Naive thymus-derived CD8-positive, alpha-beta T cell (primary cell): ENCODE measurements at regions of chr17 and their contacts with region 1.

Region 1: GRCh38 chr17:79796763-79797491 is at the start of gene CBX8:
- DNase-seq: peak; percentile 96 to 100 (median 98)
- ATAC-seq: peak; percentile 82 to 85
- H3K4me3 Mint-ChIP-seq: peak within 1 kb of the TSS; percentile 82 to 94 (median 88)
- H3K27ac Mint-ChIP-seq: peak within 1 kb of the TSS; percentile 53 to 97 (median 90)
- H3K4me1 Mint-ChIP-seq: peaks cover 13 to 47% (median 43%) of the 10 kb centered on the region in 4 donors
- H3K27me3 Mint-ChIP-seq: peaks cover 21 to 40% (median 30%) of the 10 kb centered on the region in 5 donors
- polyA plus RNA-seq, gene CBX8: 0.13 to 1.4 (median 0.77) TPM

Region 2: DNA sequence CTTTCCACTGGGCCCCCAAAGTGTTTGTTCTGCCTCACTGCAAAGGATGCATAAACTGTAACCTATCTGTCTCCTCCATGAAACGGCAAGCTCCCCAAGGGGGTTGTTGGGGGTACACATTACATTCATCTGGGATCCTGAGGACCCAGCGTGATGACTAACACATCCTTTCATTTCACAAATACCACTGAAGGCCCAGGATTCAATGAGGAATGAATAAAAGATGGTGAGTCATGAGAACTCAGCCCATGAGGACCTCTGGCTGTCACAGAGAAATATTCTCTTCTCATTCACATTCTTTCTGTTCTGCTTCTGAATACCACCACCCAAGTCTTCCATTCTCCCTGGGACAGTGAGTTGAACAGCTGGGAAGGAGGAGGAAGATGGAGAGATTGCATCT is 335.9 kb before region 1 on chr17:
- POLR2A ChIA-PET with region 1: no interaction called
- DNase-seq: no peak
- ATAC-seq: no peak
- H3K4me3 Mint-ChIP-seq: no peak overlapping the region
- H3K27ac Mint-ChIP-seq: no peak overlapping the region
- H3K4me1 Mint-ChIP-seq: peaks cover 0 to 2% (median 0%) of the 10 kb centered on the region in 4 donors
- H3K27me3 Mint-ChIP-seq: peaks cover 0 to 16% (median 10%) of the 10 kb centered on the region in 5 donors

Region 3: DNA sequence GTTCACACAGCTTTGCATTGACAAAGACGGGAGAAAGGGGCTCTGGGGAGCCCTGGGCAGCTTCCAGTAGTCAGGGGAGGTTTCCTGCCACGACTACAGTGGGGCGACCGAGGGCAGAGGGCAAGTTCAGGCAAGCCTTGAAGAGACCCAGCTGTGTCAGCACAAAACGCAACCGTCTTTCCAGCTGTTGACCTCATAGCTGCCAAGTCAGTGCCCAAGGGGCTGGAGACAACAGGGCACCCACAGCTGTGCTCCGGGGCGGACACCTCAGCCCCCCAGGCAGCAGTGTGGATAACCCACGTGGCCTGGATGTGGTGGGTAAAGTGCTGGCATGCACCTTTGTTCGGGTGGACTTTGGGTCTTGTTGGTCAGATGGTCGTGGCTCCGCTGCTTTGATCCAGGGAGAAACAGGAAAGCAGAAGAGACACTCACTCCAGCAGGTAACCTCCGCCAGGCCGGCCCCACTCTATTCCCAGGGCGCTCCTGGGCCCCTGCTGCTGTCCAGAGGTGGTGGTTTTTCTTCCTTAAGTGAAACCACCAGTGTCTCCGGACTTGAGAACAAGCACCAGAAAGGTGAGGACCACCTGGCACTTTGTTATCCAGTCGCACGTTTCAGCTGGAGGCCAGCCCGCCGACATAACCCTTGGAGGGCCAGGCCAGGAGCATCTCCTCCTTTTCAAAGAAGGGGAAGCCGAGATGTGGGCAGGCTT is 36.6 kb before region 1 on chr17:
- POLR2A ChIA-PET with region 1: no interaction called
- DNase-seq: no peak
- ATAC-seq: no peak
- H3K4me3 Mint-ChIP-seq: no peak overlapping the region
- H3K27ac Mint-ChIP-seq: no peak overlapping the region
- H3K4me1 Mint-ChIP-seq: no peaks in the 10 kb centered on the region
- H3K27me3 Mint-ChIP-seq: peaks cover 0 to 12% (median 3%) of the 10 kb centered on the region in 5 donors

Region 4: DNA sequence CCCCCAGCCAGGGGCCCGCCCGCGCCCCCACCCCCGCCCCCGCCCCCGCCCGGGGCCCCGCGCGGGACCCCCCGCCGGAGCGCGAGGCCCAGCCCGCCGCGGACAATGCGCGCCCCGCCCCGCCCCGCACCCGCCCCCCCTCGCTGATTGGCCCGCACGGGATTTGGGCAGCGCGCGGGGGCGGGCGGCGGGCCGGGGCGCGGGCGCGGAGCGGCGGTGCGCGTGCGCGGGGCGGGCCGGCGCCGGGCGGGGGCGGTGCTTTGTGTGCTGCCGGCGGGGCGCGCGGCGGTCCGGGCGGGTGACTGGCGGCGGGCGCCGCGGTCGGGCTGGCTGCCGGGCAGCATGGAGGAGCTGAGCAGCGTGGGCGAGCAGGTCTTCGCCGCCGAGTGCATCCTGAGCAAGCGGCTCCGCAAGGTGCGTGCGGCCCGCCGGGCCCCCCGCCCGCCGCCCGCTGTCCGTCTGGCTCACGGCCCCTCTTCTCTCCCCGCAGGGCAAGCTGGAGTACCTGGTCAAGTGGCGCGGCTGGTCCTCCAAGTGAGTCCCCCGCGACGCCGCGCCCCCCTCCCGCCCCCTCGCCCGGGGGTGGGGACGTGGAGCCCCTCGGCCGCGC is 18.9 kb before region 1 on chr17 and contains the start of gene CBX2:
- POLR2A ChIA-PET with region 1: interaction called, 15 read pairs
- DNase-seq: peak; percentile 58 to 86 (median 75)
- ATAC-seq: peak; percentile 77 to 82
- H3K4me3 Mint-ChIP-seq: peak within 1 kb of the TSS; percentile 79 to 96 (median 89)
- H3K27ac Mint-ChIP-seq: peak within 1 kb of the TSS in 7 of 10 donors; percentile 23 to 84 (median 67)
- H3K4me1 Mint-ChIP-seq: peaks cover 34 to 52% (median 44%) of the 10 kb centered on the region in 4 donors
- H3K27me3 Mint-ChIP-seq: peaks cover 26 to 82% (median 46%) of the 10 kb centered on the region in 5 donors
- polyA plus RNA-seq, gene CBX2: 0.16 to 0.60 (median 0.46) TPM

Region 5: DNA sequence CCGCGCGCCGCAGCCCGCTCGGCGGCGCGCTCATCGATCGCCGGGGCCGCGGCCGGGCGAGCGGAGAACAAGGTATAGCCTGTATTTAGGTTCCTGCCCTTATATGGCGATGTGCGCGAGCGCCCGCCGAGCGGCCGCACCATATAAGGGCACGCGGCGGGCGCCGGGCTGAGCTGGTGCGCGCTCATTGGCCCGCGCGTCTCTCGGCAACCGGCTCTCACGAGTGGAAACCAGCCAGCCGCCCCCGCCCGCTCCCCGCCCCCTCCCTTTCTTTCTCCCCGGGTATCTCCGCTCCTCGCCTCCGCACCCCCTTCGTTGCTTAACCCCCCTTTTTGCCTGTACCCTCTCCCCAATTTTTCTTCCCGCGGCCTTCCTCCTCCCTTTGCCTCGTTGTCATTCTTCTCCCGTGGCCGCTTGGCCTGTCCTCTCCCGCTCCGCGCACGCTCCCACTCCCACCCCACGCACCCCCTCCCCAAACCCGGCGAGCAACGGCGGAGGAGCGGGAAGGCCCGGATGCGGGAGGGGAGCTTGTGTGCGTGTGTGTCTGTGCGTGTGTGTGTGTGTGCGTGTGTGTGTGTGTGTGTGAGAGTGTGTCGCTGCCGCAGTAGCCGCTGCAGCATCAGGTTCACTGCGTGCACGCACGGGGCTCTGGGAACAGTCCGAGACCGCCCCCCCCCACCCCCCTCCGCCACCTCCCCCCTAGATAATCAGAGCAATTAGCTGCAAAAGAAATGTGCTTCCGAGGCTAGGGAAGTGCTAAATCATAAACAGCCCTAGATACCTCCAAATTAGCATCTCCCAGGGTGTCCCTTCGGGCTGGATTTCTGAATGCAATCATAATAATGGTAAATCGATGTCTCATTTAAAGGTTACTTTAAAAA is 13.4 kb after region 1 on chr17:
- POLR2A ChIA-PET with region 1: interaction called, 83 read pairs
- DNase-seq: peak; percentile 50 to 87 (median 70)
- ATAC-seq: peak; percentile 86 to 90
- H3K4me3 Mint-ChIP-seq: peak overlapping the region in 8 of 10 donors; percentile 27 to 66 (median 50)
- H3K27ac Mint-ChIP-seq: peak overlapping the region in 1 of 10 donors; percentile 69
- H3K4me1 Mint-ChIP-seq: peaks cover 19 to 44% (median 33%) of the 10 kb centered on the region in 4 donors
- H3K27me3 Mint-ChIP-seq: peaks cover 42 to 81% (median 51%) of the 10 kb centered on the region in 5 donors